ENCODE measurements at regions of chr14 and their contacts with region 1.

Region 1: GRCh38 chr14:20413045-20413799 is at the start of gene TEP1:
- DNase-seq: peak; percentile 82
- ATAC-seq: peak; percentile 88
- H3K4me3 Mint-ChIP-seq: peak within 1 kb of the TSS; percentile 99
- H3K27ac Mint-ChIP-seq: peak within 1 kb of the TSS; percentile 99
- H3K4me1 Mint-ChIP-seq: peaks cover 38% of the 10 kb centered on the region
- H3K27me3 Mint-ChIP-seq: no peaks in the 10 kb centered on the region
- total RNA-seq, gene TEP1: 57.9 to 68.3 TPM

Region 2: DNA sequence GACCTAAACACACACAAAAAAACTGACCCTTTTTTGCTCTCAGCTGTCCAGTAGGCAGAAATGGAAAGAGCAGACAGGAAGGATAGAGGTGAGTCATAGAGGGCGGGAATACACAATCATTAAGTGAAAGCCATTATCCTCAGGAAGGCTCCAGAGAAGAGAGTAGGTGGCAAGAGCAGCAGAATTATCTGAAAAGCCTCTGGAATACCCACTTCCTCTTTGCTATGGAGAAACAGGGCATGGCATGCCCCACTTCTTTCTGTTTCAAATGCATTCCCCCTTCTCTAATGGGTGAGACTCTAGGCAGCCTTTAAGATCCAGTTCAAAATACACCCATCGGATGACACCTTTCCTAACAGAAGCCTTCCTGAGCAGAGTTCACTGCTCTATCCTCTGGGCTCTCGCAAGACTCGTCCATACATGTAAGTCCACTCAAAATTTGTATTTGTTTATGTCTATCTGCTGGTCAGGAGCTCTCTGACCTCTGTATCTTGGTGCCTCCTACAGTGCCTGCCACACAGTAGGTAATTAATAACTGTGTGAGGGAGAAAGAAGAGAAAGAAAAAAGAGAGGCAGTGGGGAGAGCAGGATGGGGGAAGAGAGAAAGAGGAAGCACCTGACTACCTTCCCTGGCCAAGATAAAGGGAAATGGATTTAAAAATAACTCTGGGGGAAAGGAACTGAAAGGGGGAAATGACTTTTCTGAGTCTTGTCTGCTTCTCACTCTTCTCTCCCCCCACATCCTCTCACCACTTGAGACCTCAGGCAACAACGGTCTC is 14.2 kb after region 1 on chr14:
- POLR2A ChIA-PET with region 1: interaction called, 10 read pairs
- DNase-seq: no peak
- ATAC-seq: peak; percentile 66
- H3K4me3 Mint-ChIP-seq: peak overlapping the region; percentile 83
- H3K27ac Mint-ChIP-seq: peak overlapping the region; percentile 94
- H3K4me1 Mint-ChIP-seq: peaks cover 36% of the 10 kb centered on the region
- H3K27me3 Mint-ChIP-seq: no peaks in the 10 kb centered on the region

Region 3: GRCh38 chr14:20461274-20462001 is 48.2 kb after region 1 on chr14 and contains the start of gene PIP4P1:
- POLR2A ChIA-PET with region 1: interaction called, 22 read pairs
- DNase-seq: peak; percentile 97
- ATAC-seq: peak; percentile 96
- H3K4me3 Mint-ChIP-seq: peak within 1 kb of the TSS; percentile 98
- H3K27ac Mint-ChIP-seq: peak within 1 kb of the TSS; percentile 93
- H3K4me1 Mint-ChIP-seq: peaks cover 26% of the 10 kb centered on the region
- H3K27me3 Mint-ChIP-seq: no peaks in the 10 kb centered on the region
- total RNA-seq, gene PIP4P1: 42.4 to 45.8 TPM

Region 4: DNA sequence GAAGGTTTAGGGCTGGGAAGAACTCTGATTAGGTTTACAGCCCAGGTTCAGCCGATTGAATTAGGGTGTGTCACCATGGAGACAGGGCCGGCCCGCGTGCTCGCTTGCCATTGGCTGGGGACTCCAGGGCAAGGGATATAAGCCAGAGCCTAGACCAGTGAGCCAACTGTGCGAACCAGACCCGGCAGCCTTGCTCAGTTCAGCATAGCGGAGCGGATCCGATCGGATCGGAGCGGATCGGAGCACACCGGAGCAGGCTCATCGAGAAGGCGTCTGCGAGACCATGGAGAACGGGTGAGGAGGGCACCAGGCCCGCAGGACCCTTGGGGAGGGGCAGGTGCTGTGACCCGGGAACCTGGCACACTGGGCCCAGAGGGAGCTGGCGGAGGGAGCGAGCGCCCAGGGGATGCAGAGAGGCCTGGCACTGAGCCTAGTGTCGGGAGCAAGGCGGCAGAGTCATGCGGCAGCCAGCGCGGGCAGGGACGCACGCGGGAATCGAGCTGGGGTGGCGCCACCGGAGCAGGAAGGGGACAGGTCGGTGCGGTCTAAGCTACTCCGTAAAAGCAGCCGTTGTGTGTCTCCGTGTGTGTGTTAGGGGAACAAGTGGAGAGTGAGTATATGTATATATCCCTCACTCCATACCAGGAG is 56.1 kb after region 1 on chr14 and contains the start of gene PNP:
- POLR2A ChIA-PET with region 1: interaction called, 31 read pairs
- DNase-seq: peak; percentile 86
- ATAC-seq: peak; percentile 94
- H3K4me3 Mint-ChIP-seq: peak within 1 kb of the TSS; percentile 99
- H3K27ac Mint-ChIP-seq: peak within 1 kb of the TSS; percentile 99
- H3K4me1 Mint-ChIP-seq: peaks cover 42% of the 10 kb centered on the region
- H3K27me3 Mint-ChIP-seq: no peaks in the 10 kb centered on the region
- total RNA-seq, gene PNP: 135 to 141 TPM

Region 5: DNA sequence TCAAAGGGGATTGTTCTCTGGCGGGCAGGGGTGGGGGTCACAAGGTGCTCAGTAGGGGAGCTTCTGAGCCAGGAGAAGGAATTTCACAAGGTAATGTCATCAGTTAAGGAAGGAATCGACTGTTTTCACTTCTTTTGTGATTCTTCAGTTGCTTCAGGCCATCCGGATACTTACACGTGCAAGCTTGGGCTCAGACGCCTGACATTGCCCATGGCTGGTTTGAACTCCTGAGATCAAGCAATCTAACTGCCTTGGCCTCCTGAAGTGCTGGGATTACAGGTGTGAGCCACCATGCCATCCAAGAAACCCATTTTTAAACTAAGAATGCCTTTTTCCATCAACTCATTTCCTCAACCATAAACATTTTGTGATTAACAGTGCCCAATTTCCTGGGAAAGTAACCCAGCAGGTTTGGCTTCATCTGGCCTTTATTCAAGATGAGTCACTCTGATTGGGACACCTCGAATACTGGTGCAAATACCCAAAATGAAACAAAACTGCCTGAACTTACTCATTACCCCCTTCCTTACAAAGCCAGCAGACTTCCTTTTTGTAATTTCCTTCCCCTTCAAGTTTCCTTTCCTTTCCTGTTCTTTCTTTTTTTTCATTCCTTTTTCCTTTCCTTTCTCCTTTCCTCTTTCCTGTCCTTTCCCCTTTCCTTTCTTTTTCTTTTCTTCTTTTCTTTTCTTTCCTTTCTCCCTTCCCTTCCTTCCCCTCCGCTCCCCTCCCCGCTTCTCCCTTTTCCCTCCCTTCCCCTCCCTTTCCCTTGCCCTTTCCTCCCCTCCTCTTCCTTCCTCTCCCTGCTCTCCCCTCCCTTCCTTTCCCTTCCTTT is 81.9 kb after region 1 on chr14:
- POLR2A ChIA-PET with region 1: no interaction called
- DNase-seq: no peak
- ATAC-seq: no peak
- H3K4me3 Mint-ChIP-seq: no peak overlapping the region
- H3K27ac Mint-ChIP-seq: no peak overlapping the region
- H3K4me1 Mint-ChIP-seq: peaks cover 33% of the 10 kb centered on the region
- H3K27me3 Mint-ChIP-seq: no peaks in the 10 kb centered on the region

Measured in activated naive CD8-positive, alpha-beta T cell treated with anti-CD3 and anti-CD28 coated beads, Interleukin-2, amount 10 ng/mL, durations not matched to agents 7 days and 5 days (primary cell).